CD4-positive, alpha-beta T cell (primary cell): ENCODE measurements at regions of chr1 and their contacts with region 1.

Region 1: GRCh38 chr1:160637821-160638539 is 8.9 kb downstream of the SLAMF1 start:
- DNase-seq: peak in 7 of 14 experiments; percentile 26 to 93 (median 54)
- ATAC-seq: peak; percentile 80
- H3K4me3 ChIP-seq: peak overlapping the region; percentile 27
- H3K4me3 Mint-ChIP-seq: peak overlapping the region; percentile 86
- H3K27ac ChIP-seq: peak overlapping the region; percentile 71 to 72
- H3K27ac Mint-ChIP-seq: peak overlapping the region; percentile 97
- H3K4me1 ChIP-seq: peaks cover 90% of the 10 kb centered on the region
- H3K4me1 Mint-ChIP-seq: peaks cover 97% of the 10 kb centered on the region
- H3K27me3 ChIP-seq: no peaks in the 10 kb centered on the region
- H3K27me3 Mint-ChIP-seq: no peaks in the 10 kb centered on the region
- CTCF ChIP-seq: no peak

Region 2: GRCh38 chr1:160618763-160619274 is 19.2 kb before region 1 on chr1:
- CTCF ChIA-PET with region 1: interaction called, 6 read pairs
- POLR2A ChIA-PET with region 1: interaction called, 11 read pairs
- intact Hi-C with region 1: loop called in 1 of 2 experiments (anchors 2 kb)
- DNase-seq: peak in 8 of 14 experiments; percentile 19 to 79 (median 44)
- ATAC-seq: peak; percentile 67
- H3K4me3 ChIP-seq: no peak overlapping the region
- H3K4me3 Mint-ChIP-seq: no peak overlapping the region
- H3K27ac ChIP-seq: no peak overlapping the region
- H3K27ac Mint-ChIP-seq: peak overlapping the region; percentile 42
- H3K4me1 ChIP-seq: peaks cover 44% of the 10 kb centered on the region
- H3K4me1 Mint-ChIP-seq: peaks cover 84% of the 10 kb centered on the region
- H3K27me3 ChIP-seq: no peaks in the 10 kb centered on the region
- H3K27me3 Mint-ChIP-seq: no peaks in the 10 kb centered on the region
- CTCF ChIP-seq: peak; percentile 80

Region 3: DNA sequence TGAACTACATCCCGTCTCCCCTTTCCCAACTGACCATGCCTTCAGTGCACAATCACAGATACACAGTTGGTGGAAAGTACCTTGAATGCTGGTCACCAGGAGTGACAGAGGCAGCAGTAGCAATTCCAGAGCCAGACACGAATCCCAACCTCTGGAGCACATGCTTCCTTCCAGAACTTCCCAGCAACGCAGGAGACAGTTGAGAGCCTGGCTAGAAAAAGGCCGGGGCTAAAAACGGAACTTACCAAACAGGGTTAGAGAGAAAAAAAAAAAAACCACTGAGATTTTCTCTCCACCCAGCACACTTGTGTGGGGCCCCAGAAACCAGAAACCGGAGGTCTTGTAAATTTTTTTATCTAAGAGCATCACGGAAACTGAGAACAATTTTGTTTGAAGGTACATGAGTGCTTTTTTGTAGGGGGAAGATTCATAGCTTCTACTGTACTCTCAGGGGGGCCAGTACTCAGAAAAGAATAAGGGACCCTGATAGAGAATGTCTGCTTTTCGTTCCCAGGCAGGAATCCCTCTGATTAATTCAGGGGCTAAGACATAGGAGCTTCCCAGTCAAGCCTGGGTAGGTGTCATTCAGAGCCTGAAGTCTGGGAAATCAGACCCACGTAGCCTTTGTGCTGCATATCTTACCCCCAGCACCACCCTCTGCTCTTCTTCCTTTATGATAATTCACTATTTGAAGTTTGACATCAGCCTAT is 73.8 kb after region 1 on chr1 and contains the start of gene CD48:
- CTCF ChIA-PET with region 1: no interaction called
- POLR2A ChIA-PET with region 1: interaction called, 4 read pairs
- intact Hi-C with region 1: loop called in 1 of 2 experiments (anchors 5 kb)
- DNase-seq: peak in 11 of 14 experiments; percentile 26 to 88 (median 50)
- ATAC-seq: peak; percentile 52
- H3K4me3 ChIP-seq: peak within 1 kb of the TSS; percentile 73
- H3K4me3 Mint-ChIP-seq: no peak within 1 kb of the TSS
- H3K27ac ChIP-seq: peak within 1 kb of the TSS; percentile 86 to 93
- H3K27ac Mint-ChIP-seq: no peak within 1 kb of the TSS
- H3K4me1 ChIP-seq: peaks cover 52% of the 10 kb centered on the region
- H3K4me1 Mint-ChIP-seq: peaks cover 50% of the 10 kb centered on the region
- H3K27me3 ChIP-seq: no peaks in the 10 kb centered on the region
- H3K27me3 Mint-ChIP-seq: no peaks in the 10 kb centered on the region
- CTCF ChIP-seq: no peak
- total RNA-seq, gene CD48: 387 to 395 TPM